HepG2 (cell line): ENCODE measurements at regions of chr12 and their contacts with region 1.

Region 1: DNA sequence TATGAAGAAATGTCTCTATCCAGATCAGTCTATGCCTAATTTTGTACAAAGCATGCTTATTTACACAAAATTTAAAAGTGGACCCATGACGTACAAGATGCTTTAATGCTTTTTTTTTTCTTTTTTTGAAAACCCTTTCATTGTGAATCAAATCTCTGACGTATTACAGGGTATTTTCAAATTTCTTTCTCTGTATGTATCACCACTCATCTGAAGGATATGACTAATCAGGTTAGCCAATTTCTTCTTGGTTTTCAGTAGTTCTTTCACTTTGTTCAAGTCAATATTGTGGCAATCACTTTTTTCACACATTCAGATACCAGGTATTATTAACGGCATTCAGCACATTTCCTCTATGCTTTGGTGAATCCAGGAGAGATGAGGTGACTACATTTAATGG is 685.3 kb downstream of the TRHDE start:
- DNase-seq: no peak
- ATAC-seq: no peak
- H3K4me3 ChIP-seq: no peak overlapping the region
- H3K27ac ChIP-seq: no peak overlapping the region
- H3K4me1 ChIP-seq: no peaks in the 10 kb centered on the region
- H3K27me3 ChIP-seq: no peaks in the 10 kb centered on the region
- CTCF ChIP-seq: no peak
- EP300 ChIP-seq: no peak
- POLR2A ChIP-seq: no peak
- RAD21 ChIP-seq: no peak

Region 2: GRCh38 chr12:74537707-74538385 is 1580.4 kb after region 1 on chr12 and contains the start of gene ATXN7L3B:
- CTCF ChIA-PET with region 1: no interaction called
- POLR2A ChIA-PET with region 1: no interaction called
- in situ Hi-C with region 1: no loop called
- intact Hi-C with region 1: loop called (anchors 5 kb)
- DNase-seq: peak; percentile 89
- ATAC-seq: peak; percentile 98
- H3K4me3 ChIP-seq: peak within 1 kb of the TSS; percentile 80 to 86 (median 85)
- H3K27ac ChIP-seq: peak within 1 kb of the TSS; percentile 96
- H3K4me1 ChIP-seq: peaks cover 32% of the 10 kb centered on the region
- H3K27me3 ChIP-seq: no peaks in the 10 kb centered on the region
- CTCF ChIP-seq: 0 out of 2 replicates have a peak, but pooled peaks have one; percentile 11
- EP300 ChIP-seq: no peak
- POLR2A ChIP-seq: peak; percentile 78 to 79
- RAD21 ChIP-seq: peak; percentile 44; the same call in 1 of the 2 replicates
- total RNA-seq, gene ATXN7L3B: 23.8 and 34.9 TPM in 2 replicates